ENCODE measurements at regions of chr12 and their contacts with region 1.

Region 1: DNA sequence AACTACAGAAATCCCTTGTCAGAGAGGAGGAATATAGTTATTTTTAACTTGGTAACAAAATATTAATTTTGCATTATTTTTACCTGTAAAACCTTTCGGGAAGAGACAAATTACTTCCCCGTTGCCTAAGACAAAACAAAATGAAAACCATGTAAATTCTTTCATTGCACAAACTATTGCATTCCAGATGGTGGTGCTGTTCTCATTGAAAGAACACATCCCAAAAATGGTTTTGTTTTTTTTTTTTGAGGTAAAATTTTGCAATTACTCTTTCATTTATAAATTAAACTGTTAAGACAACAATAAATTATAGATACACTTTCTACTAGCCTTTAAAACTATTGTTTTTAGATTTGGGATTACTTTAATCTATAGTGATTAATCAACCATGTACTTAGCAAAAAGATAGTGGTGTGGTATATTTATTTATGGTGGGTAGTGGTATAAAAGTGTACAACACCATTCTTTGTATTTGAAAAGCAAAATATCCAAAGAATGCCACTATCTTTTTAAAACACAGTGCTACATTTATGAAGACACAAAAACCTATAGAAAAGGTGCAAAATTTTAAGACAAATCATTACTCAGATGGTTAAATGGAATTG is 115.5 kb downstream of the SLC38A1 start:
- DNase-seq: no peak
- ATAC-seq: no peak
- H3K4me3 Mint-ChIP-seq: no peak overlapping the region
- H3K27ac Mint-ChIP-seq: no peak overlapping the region
- H3K4me1 Mint-ChIP-seq: peaks cover 9% of the 10 kb centered on the region
- H3K27me3 Mint-ChIP-seq: peaks cover under 1% of the 10 kb centered on the region

Region 2: DNA sequence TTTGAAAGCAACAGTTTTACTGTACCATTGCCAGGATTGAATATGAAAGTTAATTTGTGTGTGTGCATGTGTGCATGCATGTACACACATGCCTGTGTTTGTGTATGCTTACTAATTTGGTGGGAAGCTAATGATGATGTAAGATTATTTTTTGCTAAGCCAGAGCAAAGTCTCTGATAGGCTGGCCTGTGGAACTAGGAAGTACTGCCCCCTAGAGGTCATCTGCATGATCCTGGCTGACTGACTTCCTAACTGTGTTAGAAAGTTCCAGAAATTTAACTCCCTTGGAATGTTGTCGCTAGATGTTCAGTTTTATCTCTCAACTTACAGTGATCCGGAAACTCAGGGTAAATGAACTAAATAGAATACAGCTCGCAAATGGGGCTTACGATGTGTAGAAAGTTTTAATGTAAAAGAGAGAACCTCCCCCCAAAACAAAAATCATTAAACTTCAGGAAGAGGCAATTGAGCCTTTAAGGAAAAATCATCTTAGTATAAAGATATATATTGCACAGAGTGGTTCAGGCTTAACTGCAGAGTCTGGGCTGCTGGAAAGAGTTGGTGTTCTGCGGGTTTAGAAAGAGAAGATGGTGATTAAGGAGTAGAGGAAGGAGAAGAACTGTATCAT is 149.8 kb after region 1 on chr12:
- CTCF ChIA-PET with region 1: interaction called, 11 read pairs
- POLR2A ChIA-PET with region 1: no interaction called
- intact Hi-C with region 1: loop called (anchors 1 kb)
- DNase-seq: peak; percentile 62
- ATAC-seq: peak; percentile 85
- H3K4me3 Mint-ChIP-seq: no peak overlapping the region
- H3K27ac Mint-ChIP-seq: no peak overlapping the region
- H3K4me1 Mint-ChIP-seq: no peaks in the 10 kb centered on the region
- H3K27me3 Mint-ChIP-seq: no peaks in the 10 kb centered on the region

Region 3: GRCh38 chr12:46364777-46365580 is 211.6 kb after region 1 on chr12:
- CTCF ChIA-PET with region 1: no interaction called
- POLR2A ChIA-PET with region 1: no interaction called
- intact Hi-C with region 1: loop called in 1 of 2 experiments (anchors 5 kb)
- DNase-seq: peak; percentile 37
- ATAC-seq: no peak
- H3K4me3 Mint-ChIP-seq: no peak overlapping the region
- H3K27ac Mint-ChIP-seq: peak overlapping the region; percentile 42
- H3K4me1 Mint-ChIP-seq: peaks cover 78% of the 10 kb centered on the region
- H3K27me3 Mint-ChIP-seq: no peaks in the 10 kb centered on the region

Region 4: DNA sequence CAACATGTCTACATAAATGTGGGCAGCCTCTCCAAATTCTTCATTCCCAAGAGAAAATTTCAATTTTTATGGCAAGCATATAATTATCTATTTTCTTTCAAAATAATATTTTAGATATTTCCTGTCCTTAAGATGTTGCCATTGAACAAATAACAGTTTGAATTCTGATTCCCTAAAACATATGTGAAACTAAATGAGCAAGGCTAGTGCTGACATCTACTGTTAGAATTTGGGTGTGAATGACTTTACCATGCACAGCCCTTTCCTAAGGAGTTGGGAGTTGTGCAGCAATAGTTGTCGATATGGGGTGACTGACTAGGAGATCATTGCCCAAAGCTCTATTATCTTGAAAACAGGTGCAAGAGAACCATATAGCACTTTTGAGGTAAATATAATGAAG is 780.6 kb after region 1 on chr12:
- CTCF ChIA-PET with region 1: no interaction called
- POLR2A ChIA-PET with region 1: no interaction called
- intact Hi-C with region 1: loop called in 1 of 2 experiments (anchors 10 kb)
- DNase-seq: no peak
- ATAC-seq: no peak
- H3K4me3 Mint-ChIP-seq: no peak overlapping the region
- H3K27ac Mint-ChIP-seq: no peak overlapping the region
- H3K4me1 Mint-ChIP-seq: no peaks in the 10 kb centered on the region
- H3K27me3 Mint-ChIP-seq: peaks cover 18% of the 10 kb centered on the region

Region 5: DNA sequence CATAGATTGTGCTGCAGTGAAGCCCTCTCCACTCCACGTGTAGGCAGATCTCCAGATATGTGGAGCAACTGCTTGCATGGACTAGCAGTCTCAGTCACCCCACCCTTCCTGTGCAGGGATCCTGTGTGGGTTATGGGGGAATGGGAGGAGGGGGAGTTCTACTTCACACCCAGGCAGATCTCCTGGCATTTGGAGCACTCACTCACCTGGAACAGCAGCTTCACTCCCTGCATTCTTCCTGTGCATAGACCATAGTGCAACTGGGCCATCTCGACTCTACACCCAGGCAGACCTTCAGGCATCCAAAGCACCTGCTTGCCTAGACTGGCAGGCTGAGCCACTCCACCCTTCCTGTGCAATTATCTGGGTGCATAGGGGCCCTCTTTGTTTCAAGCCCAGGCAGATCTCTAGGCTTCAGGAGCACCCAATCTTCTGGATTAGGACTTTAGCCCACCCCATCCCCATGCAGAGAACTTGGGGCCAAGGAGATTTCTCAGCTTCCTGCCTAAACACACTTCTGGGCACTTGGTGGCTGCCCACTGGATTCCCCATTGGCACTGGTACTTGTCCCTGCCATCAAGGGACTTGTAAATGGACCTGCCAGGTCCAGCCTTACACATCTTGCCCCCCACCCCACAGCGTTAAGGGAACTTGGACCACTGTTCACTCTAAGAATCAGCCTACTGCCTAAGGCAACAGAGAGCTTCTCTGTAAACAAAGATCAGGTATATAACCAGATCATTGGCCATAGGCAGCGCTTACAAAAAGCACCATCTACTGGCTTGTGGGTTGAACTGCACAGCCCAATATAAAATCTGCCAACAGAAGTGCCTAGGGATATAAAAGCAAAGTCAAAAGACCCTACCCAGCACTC is 830.3 kb after region 1 on chr12:
- CTCF ChIA-PET with region 1: no interaction called
- POLR2A ChIA-PET with region 1: no interaction called
- intact Hi-C with region 1: loop called in 1 of 2 experiments (anchors 10 kb)
- DNase-seq: peak; percentile 44
- ATAC-seq: peak; percentile 66
- H3K4me3 Mint-ChIP-seq: no peak overlapping the region
- H3K27ac Mint-ChIP-seq: no peak overlapping the region
- H3K4me1 Mint-ChIP-seq: peaks cover 4% of the 10 kb centered on the region
- H3K27me3 Mint-ChIP-seq: peaks cover 19% of the 10 kb centered on the region